ENCODE measurements at regions of chr19 and their contacts with region 1.

Region 1: DNA sequence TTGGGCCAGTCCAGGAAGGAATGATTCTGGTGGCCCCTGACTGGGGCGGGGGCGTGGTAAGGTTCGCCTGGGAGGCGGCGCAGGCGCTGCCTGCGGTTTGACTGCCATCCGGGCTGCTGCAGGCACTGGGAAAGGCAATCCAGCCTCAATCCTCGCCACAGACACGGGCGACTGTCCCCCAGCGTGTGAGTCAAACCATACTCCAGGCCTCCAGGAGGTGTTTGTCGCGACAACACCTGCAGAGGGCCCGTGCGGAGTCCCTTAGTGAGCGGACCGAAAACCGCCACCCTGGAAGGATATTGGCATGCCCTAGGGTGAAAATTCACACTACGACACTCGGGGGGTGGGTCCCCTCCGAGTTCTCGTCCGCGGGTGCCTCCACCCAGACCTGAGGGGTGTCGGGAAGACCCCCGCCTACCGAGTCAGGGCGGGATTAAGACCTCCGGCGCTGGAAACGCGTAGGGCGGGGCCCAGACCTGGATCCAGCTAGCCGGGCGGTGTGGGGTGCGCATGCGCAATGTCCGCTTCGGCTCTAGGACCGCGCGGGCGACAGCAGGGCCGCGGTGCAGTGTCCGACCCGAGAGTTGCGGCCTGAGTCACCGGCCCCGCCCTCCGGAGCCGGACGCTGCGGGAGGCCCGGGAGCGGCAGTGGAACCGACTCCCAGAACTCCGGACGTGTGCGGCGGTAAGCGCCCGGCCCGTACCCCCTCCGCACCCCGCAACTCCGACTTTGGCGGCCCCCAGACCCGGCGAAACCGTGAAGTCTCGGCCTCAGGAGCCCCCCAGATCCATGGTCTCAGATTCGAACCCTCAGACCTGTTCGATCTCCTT is at the start of gene CAPNS1:
- DNase-seq: peak; percentile 88
- ATAC-seq: peak; percentile 88
- H3K4me3 ChIP-seq: peak within 1 kb of the TSS; percentile 79 to 100 (median 98)
- H3K27ac ChIP-seq: peak within 1 kb of the TSS; percentile 93
- H3K4me1 ChIP-seq: peaks cover 24% of the 10 kb centered on the region
- H3K27me3 ChIP-seq: no peaks in the 10 kb centered on the region; a peak in 1 of 5 replicates
- CTCF ChIP-seq: peak; percentile 21
- EP300 ChIP-seq: no peak
- POLR2A ChIP-seq: peak; percentile 60 to 86; a peak in 3 of 4 replicates
- RAD21 ChIP-seq: peak; percentile 43; the same call in 1 of the 2 replicates
- total RNA-seq, gene CAPNS1: 280 and 322 TPM in 2 replicates

Region 2: DNA sequence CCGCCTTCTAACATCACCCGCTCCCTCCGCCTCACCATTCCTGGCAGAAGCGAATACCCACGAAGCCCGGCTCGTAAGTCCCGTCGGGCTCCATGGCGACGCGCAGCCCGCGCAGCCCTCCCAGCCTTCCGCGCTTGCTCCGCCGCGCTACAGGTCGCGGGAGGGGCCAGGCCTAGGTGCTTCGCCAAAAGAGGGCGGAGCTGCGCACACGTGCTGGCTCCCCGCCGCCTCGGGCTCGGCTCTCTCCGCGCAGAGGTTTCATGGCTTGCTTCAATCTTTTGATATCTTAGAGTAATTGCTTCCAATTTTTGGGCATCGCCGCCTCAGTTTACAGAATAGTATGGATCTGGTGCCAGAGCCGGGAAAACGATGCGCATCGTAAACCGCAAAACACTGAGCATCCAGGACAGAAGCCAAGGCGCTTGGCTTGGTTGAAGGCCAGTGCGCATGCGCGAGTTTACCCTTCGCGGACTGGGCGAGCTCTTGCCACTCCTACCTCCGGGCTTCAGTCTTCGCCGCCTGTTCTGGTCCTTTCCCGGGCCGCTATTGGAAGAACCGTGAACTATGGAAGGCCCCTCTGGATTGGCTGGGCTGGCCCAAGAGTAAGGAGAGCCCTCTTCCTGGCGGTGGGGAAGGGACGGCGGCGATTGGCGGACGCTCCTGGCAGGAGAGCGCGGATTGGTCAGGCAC is 24.8 kb before region 1 on chr19 and contains the start of gene POLR2I:
- CTCF ChIA-PET with region 1: no interaction called
- POLR2A ChIA-PET with region 1: interaction called, 14 read pairs
- in situ Hi-C with region 1: no loop called
- intact Hi-C with region 1: loop called (anchors 1 kb)
- DNase-seq: peak; percentile 99
- ATAC-seq: peak; percentile 93
- H3K4me3 ChIP-seq: peak within 1 kb of the TSS; percentile 72 to 93 (median 88)
- H3K27ac ChIP-seq: peak within 1 kb of the TSS; percentile 77
- H3K4me1 ChIP-seq: peaks cover 45% of the 10 kb centered on the region
- H3K27me3 ChIP-seq: no peaks in the 10 kb centered on the region; a peak in 1 of 5 replicates
- CTCF ChIP-seq: 0 out of 2 replicates have a peak, but pooled peaks have one; percentile 21
- EP300 ChIP-seq: no peak
- POLR2A ChIP-seq: peak; percentile 60 to 75
- RAD21 ChIP-seq: peak; percentile 66
- total RNA-seq, gene POLR2I: 101 and 104 TPM in 2 replicates

Region 3: DNA sequence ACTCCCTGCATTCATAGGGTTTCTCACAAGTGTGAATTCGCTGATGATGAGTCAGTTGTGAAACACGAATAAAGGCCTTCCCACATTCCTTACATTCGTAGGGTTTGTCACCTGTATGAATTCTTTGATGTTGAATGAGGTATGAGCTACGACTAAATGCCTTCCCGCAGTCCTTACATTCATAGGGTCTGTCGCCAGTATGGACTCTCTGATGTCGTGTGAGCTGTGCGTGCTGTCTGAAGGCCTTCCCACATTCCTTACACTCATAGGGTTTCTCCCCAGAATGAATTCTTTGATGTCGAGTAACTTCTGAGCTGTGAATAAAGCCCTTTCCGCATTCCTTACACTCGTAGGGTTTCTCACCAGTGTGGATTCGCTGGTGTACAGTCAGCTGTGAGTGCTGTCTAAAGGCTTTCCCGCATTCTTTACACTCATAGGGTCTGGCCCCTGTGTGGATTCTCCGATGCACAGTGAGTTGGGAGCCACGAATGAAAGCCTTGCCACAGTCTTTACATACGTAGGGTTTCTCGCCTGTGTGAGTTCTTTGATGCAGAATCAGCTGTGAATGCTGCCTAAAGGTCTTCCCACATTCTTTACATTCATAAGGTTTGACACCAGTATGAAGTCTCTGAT is 43.0 kb after region 1 on chr19:
- CTCF ChIA-PET with region 1: no interaction called
- POLR2A ChIA-PET with region 1: no interaction called
- in situ Hi-C with region 1: no loop called
- intact Hi-C with region 1: no loop called
- DNase-seq: no peak
- ATAC-seq: no peak
- H3K4me3 ChIP-seq: no peak overlapping the region
- H3K27ac ChIP-seq: no peak overlapping the region
- H3K4me1 ChIP-seq: no peaks in the 10 kb centered on the region
- H3K27me3 ChIP-seq: no peaks in the 10 kb centered on the region
- CTCF ChIP-seq: no peak
- EP300 ChIP-seq: no peak
- POLR2A ChIP-seq: no peak
- RAD21 ChIP-seq: no peak

Region 4: GRCh38 chr19:36221474-36221873 is 81.8 kb after region 1 on chr19:
- CTCF ChIA-PET with region 1: no interaction called
- POLR2A ChIA-PET with region 1: no interaction called
- in situ Hi-C with region 1: no loop called
- intact Hi-C with region 1: no loop called
- DNase-seq: no peak
- ATAC-seq: no peak
- H3K4me3 ChIP-seq: no peak overlapping the region
- H3K27ac ChIP-seq: no peak overlapping the region
- H3K4me1 ChIP-seq: peaks cover 38% of the 10 kb centered on the region
- H3K27me3 ChIP-seq: no peaks in the 10 kb centered on the region
- CTCF ChIP-seq: no peak
- EP300 ChIP-seq: no peak
- POLR2A ChIP-seq: no peak
- RAD21 ChIP-seq: no peak

Measured in HepG2 (cell line).